ENCODE measurements at regions of chr16 and their contacts with region 1.

Region 1: DNA sequence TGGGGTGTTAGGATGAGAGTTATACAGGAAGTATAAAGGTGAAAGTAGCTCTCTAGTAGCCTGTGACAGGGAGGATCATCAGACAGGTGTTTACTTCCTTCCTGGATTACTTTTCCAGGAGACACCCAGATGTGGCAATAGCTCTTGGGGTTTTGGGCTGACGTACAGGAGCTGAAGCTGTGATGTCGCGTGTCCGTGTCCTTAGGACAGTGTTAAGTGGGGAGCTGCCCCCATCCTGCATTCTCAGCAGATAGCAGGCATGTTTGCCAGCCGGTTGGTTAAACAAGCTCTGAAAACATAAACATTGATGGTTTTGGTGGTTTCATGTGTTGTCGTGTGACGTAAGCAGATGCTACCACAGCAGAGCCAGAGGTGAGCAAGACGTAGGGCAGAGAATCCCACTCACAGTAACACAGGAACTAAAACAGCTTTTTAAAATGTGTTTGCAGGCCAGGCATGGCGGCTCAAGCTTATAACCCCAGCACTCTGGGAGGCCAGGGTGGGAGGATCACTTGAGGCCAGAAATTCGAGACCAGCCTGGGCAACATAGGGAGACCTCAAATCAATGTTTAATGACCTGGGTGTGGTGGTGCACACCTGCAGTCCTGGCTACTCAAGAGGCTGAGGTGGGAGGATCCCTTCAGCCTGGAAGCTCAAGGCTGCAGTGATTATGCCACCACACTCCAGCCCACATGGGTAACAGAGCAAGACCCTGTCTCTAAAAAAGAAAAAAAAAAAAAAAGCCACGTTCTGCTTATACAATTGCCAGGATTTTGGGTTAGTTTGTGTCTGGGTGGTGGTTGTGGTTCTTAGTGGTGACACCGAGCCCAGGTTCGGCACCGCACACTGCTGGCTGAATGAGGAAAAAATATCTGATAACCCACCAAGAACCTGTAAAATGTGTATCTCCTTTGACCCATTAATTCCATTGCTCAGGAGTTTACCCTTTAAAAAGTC is 18.2 kb upstream of the IL17C start:
- DNase-seq: peak; percentile 90 to 95 (median 92)
- H3K4me3 ChIP-seq: no peak overlapping the region
- H3K4me3 Mint-ChIP-seq: peak overlapping the region; percentile 46 to 85 (median 68)
- H3K27ac ChIP-seq: peak overlapping the region; percentile 65
- H3K27ac Mint-ChIP-seq: peak overlapping the region; percentile 98 to 100 (median 99)
- H3K4me1 ChIP-seq: peaks cover 45% of the 10 kb centered on the region
- H3K4me1 Mint-ChIP-seq: peaks cover 16 to 54% (median 31%) of the 10 kb centered on the region in 4 donors
- H3K27me3 ChIP-seq: no peaks in the 10 kb centered on the region
- H3K27me3 Mint-ChIP-seq: peaks cover 0 to 1% of the 10 kb centered on the region in 2 donors

Region 2: GRCh38 chr16:88274847-88275246 is 345.3 kb before region 1 on chr16:
- CTCF ChIA-PET with region 1: no interaction called
- POLR2A ChIA-PET with region 1: no interaction called
- intact Hi-C with region 1: no loop called
- DNase-seq: no peak
- H3K4me3 ChIP-seq: no peak overlapping the region
- H3K4me3 Mint-ChIP-seq: no peak overlapping the region
- H3K27ac ChIP-seq: no peak overlapping the region
- H3K27ac Mint-ChIP-seq: no peak overlapping the region
- H3K4me1 ChIP-seq: no peaks in the 10 kb centered on the region
- H3K4me1 Mint-ChIP-seq: no peaks in the 10 kb centered on the region
- H3K27me3 ChIP-seq: no peaks in the 10 kb centered on the region
- H3K27me3 Mint-ChIP-seq: peaks cover 4 to 7% of the 10 kb centered on the region in 2 donors

Region 3: GRCh38 chr16:88550246-88550661 is 69.9 kb before region 1 on chr16:
- CTCF ChIA-PET with region 1: no interaction called
- POLR2A ChIA-PET with region 1: no interaction called
- intact Hi-C with region 1: no loop called
- DNase-seq: peak in 1 of 5 donors; percentile 37
- H3K4me3 ChIP-seq: peak overlapping the region in 1 of 2 donors; percentile 14
- H3K4me3 Mint-ChIP-seq: peak overlapping the region in 2 of 8 donors; percentile 54 to 79
- H3K27ac ChIP-seq: no peak overlapping the region
- H3K27ac Mint-ChIP-seq: peak overlapping the region in 1 of 7 donors; percentile 52
- H3K4me1 ChIP-seq: peaks cover 12% of the 10 kb centered on the region
- H3K4me1 Mint-ChIP-seq: peaks cover 0 to 19% (median 7%) of the 10 kb centered on the region in 4 donors
- H3K27me3 ChIP-seq: no peaks in the 10 kb centered on the region
- H3K27me3 Mint-ChIP-seq: peaks cover 3 to 4% of the 10 kb centered on the region in 2 donors

Region 4: GRCh38 chr16:88569985-88570690 is 50.0 kb before region 1 on chr16 and contains the start of gene ZC3H18:
- CTCF ChIA-PET with region 1: interaction called, 10 read pairs
- POLR2A ChIA-PET with region 1: interaction called, 42 read pairs
- intact Hi-C with region 1: no loop called
- DNase-seq: peak; percentile 93 to 96 (median 96)
- H3K4me3 ChIP-seq: peak within 1 kb of the TSS; percentile 54 to 84
- H3K4me3 Mint-ChIP-seq: peak within 1 kb of the TSS; percentile 85 to 91 (median 90)
- H3K27ac ChIP-seq: peak within 1 kb of the TSS; percentile 76
- H3K27ac Mint-ChIP-seq: peak within 1 kb of the TSS; percentile 87 to 95 (median 90)
- H3K4me1 ChIP-seq: peaks cover 24% of the 10 kb centered on the region
- H3K4me1 Mint-ChIP-seq: peaks cover 14 to 40% (median 26%) of the 10 kb centered on the region in 4 donors
- H3K27me3 ChIP-seq: no peaks in the 10 kb centered on the region
- H3K27me3 Mint-ChIP-seq: no peaks in the 10 kb centered on the region
- total RNA-seq, gene ZC3H18: 84.5 to 91.5 TPM

Region 5: GRCh38 chr16:88633684-88634140 is 13.6 kb after region 1 on chr16:
- CTCF ChIA-PET with region 1: interaction called, 11 read pairs
- POLR2A ChIA-PET with region 1: interaction called, 50 read pairs
- intact Hi-C with region 1: loop called (anchors 2 kb)
- DNase-seq: peak; percentile 52 to 77 (median 68)
- H3K4me3 ChIP-seq: peak overlapping the region in 1 of 2 donors; percentile 53
- H3K4me3 Mint-ChIP-seq: peak overlapping the region; percentile 69 to 85 (median 78)
- H3K27ac ChIP-seq: peak overlapping the region; percentile 62
- H3K27ac Mint-ChIP-seq: peak overlapping the region; percentile 66 to 93 (median 79)
- H3K4me1 ChIP-seq: peaks cover 42% of the 10 kb centered on the region
- H3K4me1 Mint-ChIP-seq: peaks cover 14 to 44% (median 28%) of the 10 kb centered on the region in 4 donors
- H3K27me3 ChIP-seq: peaks cover 2% of the 10 kb centered on the region
- H3K27me3 Mint-ChIP-seq: peaks cover 0 to 6% of the 10 kb centered on the region in 2 donors

Region 6: GRCh38 chr16:88650749-88651275 is 30.7 kb after region 1 on chr16 and contains the start of gene CYBA:
- CTCF ChIA-PET with region 1: interaction called, 3 read pairs
- POLR2A ChIA-PET with region 1: interaction called, 24 read pairs
- intact Hi-C with region 1: loop called (anchors 1 kb)
- DNase-seq: peak; percentile 81 to 87 (median 84)
- H3K4me3 ChIP-seq: peak within 1 kb of the TSS; percentile 76 to 91
- H3K4me3 Mint-ChIP-seq: peak within 1 kb of the TSS; percentile 89 to 93 (median 91)
- H3K27ac ChIP-seq: peak within 1 kb of the TSS; percentile 91
- H3K27ac Mint-ChIP-seq: peak within 1 kb of the TSS; percentile 93 to 97 (median 95)
- H3K4me1 ChIP-seq: peaks cover 28% of the 10 kb centered on the region
- H3K4me1 Mint-ChIP-seq: peaks cover 7 to 26% (median 12%) of the 10 kb centered on the region in 4 donors
- H3K27me3 ChIP-seq: no peaks in the 10 kb centered on the region
- H3K27me3 Mint-ChIP-seq: no peaks in the 10 kb centered on the region
- total RNA-seq, gene CYBA: 383 to 386 TPM

Region 7: DNA sequence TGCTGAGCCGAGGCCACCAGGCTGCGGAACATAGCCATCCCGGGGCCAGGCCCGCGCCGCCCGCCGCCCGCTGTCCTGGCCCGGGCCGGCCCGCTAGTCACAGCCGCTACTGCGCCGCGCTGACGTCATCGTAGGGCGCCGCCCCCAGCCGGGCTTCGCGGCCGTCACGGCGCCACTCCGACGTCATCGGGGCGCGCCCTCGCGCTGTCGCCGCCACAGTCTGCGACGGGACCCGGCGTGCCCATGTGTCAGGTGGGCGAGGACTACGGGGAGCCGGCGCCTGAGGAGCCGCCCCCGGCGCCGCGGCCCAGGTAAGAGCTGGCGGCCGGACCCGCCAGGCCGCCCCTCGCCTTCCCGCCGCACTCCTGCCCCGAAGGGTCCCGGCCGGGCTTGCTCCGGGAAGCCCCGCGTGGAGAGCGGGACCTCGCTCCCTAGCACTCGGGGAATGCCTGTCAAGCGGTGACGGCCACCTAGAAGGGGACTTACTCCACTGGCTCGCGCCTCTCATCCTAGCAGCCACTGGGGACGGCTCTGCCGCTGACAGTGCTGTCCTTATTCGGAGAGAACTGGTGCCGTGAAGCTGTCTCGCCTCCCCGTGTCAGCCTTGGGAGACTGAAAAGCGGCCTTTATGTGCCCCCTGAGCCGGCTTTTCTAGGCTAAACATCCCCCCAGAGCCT is 86.3 kb after region 1 on chr16 and contains the starts of genes CTU2 and RNF166:
- CTCF ChIA-PET with region 1: interaction called, 5 read pairs
- POLR2A ChIA-PET with region 1: interaction called, 73 read pairs
- intact Hi-C with region 1: loop called (anchors 1 kb)
- DNase-seq: peak; percentile 90 to 94 (median 91)
- H3K4me3 ChIP-seq: peak within 1 kb of the TSS; percentile 95 to 98
- H3K4me3 Mint-ChIP-seq: peak within 1 kb of the TSS; percentile 93 to 96 (median 96)
- H3K27ac ChIP-seq: peak within 1 kb of the TSS; percentile 85
- H3K27ac Mint-ChIP-seq: peak within 1 kb of the TSS; percentile 97 to 99 (median 98)
- H3K4me1 ChIP-seq: peaks cover 50% of the 10 kb centered on the region
- H3K4me1 Mint-ChIP-seq: peaks cover 20 to 62% (median 39%) of the 10 kb centered on the region in 4 donors
- H3K27me3 ChIP-seq: no peaks in the 10 kb centered on the region
- H3K27me3 Mint-ChIP-seq: no peaks in the 10 kb centered on the region
- total RNA-seq, gene CTU2: 20.4 to 21.1 TPM
- total RNA-seq, gene RNF166: 129 to 137 TPM